HepG2 (cell line): ENCODE measurements at regions of chr9 and their contacts with region 1.

Region 1: DNA sequence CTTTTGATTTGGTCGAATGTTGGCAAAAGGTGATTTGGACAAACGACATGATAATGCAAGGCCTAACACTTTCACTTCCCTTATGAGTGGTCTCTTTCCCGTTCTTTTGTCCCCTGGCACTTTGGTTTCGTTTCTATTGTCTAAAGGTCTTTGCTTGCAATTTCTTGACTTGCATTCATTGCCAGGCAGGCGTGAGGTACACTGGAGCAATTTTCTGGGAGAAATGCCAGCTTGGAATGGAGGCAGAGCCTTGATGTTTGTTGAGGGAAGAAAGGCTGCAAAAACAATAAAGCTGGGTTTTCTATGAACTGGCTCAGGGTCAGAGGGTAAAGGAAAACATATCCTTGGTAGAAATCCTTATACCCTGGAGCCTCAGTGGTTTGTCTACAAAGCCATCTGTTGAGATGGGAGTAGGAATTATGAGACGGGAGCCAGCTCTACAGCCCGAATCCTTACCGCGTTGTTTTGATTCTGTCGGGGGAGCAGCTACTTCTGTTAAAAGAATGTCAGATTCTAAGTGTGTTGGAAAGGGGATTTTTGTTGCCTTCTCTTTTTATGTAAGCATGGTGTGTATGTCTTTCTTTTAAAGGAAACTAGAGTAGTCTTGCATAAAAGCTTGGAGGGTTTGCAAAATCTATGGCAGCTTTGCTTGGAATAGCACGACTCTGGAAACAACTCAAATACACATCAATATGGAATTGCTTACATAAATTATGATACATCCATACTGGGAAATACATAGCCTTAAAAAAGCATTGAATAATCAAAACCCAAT is 158.9 kb downstream of the RMI1 start:
- DNase-seq: no peak
- ATAC-seq: no peak
- H3K4me3 ChIP-seq: no peak overlapping the region
- H3K27ac ChIP-seq: no peak overlapping the region
- H3K4me1 ChIP-seq: no peaks in the 10 kb centered on the region
- H3K27me3 ChIP-seq: peaks cover 0 to 13% of the 10 kb centered on the region in 2 experiments; a peak in 1 of 5 replicates
- CTCF ChIP-seq: no peak
- EP300 ChIP-seq: no peak
- POLR2A ChIP-seq: no peak
- RAD21 ChIP-seq: no peak

Region 2: GRCh38 chr9:84079994-84080393 is 59.5 kb before region 1 on chr9:
- CTCF ChIA-PET with region 1: no interaction called
- POLR2A ChIA-PET with region 1: no interaction called
- in situ Hi-C with region 1: loop called (anchors 10 kb)
- intact Hi-C with region 1: no loop called
- DNase-seq: no peak
- ATAC-seq: no peak
- H3K4me3 ChIP-seq: no peak overlapping the region
- H3K27ac ChIP-seq: no peak overlapping the region
- H3K4me1 ChIP-seq: no peaks in the 10 kb centered on the region
- H3K27me3 ChIP-seq: peaks cover 0 to 20% of the 10 kb centered on the region in 2 experiments; a peak in 2 of 5 replicates
- CTCF ChIP-seq: no peak
- EP300 ChIP-seq: no peak
- POLR2A ChIP-seq: no peak
- RAD21 ChIP-seq: no peak